ENCODE measurements at regions of chr11 and their contacts with region 1.

Region 1: DNA sequence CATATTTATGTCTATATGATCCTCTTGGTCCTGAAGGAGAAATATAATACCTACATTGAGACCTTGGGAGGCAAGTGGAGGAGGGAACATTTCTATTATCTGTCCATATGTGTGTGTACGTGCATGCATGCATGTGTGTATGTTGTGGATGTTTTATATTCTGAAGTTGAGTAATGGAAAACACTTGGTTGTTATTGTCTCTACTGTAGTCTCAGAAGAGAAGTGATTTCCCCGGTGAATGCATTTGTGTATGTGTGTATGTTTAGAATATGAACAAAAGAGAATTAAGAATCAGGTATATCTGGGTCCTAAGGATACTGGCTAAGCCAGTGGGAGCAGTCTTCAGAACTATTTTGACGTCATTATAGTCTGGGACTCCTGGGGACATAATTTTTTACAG is at the start of gene OR52N1:
- DNase-seq: no peak
- H3K4me3 ChIP-seq: no peak within 1 kb of the TSS
- H3K27ac ChIP-seq: no peak within 1 kb of the TSS
- H3K4me1 ChIP-seq: no peaks in the 10 kb centered on the region
- H3K27me3 ChIP-seq: no peaks in the 10 kb centered on the region
- CTCF ChIP-seq: no peak
- total RNA-seq, gene OR52N1: not detected

Region 2: GRCh38 chr11:5665746-5666390 is 125.3 kb before region 1 on chr11:
- intact Hi-C with region 1: no loop called
- DNase-seq: no peak
- H3K4me3 ChIP-seq: no peak overlapping the region
- H3K27ac ChIP-seq: no peak overlapping the region
- H3K4me1 ChIP-seq: no peaks in the 10 kb centered on the region
- H3K27me3 ChIP-seq: no peaks in the 10 kb centered on the region
- CTCF ChIP-seq: no peak

Region 3: GRCh38 chr11:5767056-5767455 is 24.1 kb before region 1 on chr11:
- intact Hi-C with region 1: loop called (anchors 2 kb)
- DNase-seq: no peak
- H3K4me3 ChIP-seq: no peak overlapping the region
- H3K27ac ChIP-seq: no peak overlapping the region
- H3K4me1 ChIP-seq: no peaks in the 10 kb centered on the region
- H3K27me3 ChIP-seq: no peaks in the 10 kb centered on the region
- CTCF ChIP-seq: no peak